ENCODE measurements at regions of chr2 and their contacts with region 1.

Region 1: DNA sequence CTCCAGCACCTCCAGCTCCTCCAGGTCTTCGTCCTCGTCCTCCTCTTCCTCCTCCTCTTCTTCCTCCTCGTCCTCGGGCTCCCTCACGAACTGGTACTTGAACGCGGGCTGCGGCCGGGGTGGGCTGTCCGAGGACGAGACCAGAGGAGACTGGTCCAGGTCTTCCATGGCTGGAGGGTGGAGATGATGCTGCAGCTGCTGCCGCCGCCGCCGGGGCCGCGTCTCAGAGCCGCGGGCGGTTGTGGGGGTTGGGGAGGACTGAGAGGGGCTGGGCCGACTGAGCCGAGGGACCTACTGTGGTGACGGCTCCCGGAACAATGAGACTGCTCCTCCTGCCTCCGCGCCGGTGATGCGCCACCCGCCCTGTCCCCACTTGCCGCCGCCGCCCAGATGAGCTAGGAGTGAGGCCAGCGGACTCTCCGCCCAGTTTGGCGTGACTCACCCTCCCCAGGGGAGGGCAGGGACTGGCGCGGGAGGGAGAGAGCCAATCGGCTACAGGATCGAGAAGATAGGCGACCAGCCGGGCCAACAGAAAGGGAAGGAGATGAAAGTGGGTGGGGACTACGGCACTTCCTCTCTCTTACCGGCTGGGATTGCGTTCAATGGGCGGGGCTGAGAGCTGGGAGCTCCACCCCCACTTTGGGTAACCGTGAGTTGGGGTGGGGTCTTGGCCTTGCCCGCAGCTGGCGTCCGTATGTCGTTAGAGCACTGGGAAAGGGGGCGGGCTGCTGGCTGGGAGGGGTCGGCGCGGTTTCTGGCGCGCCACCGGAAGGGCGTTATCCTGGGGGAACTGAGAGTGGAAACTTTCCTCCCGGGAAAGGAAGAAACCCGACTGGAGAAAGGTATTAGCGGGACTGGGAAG is at the start of gene RTN4:
- DNase-seq: peak; percentile 99
- H3K4me3 Mint-ChIP-seq: peak within 1 kb of the TSS; percentile 94
- H3K27ac Mint-ChIP-seq: peak within 1 kb of the TSS; percentile 99
- H3K4me1 Mint-ChIP-seq: peaks cover 24% of the 10 kb centered on the region
- H3K27me3 Mint-ChIP-seq: no peaks in the 10 kb centered on the region
- CTCF ChIP-seq: no peak
- total RNA-seq, gene RTN4: 389 and 391 TPM in 2 replicates

Region 2: GRCh38 chr2:53970724-53971602 is 1079.4 kb before region 1 on chr2 and contains the start of gene PSME4:
- CTCF ChIA-PET with region 1: no interaction called
- POLR2A ChIA-PET with region 1: interaction called, 11 read pairs
- intact Hi-C with region 1: no loop called
- DNase-seq: peak; percentile 88
- H3K4me3 Mint-ChIP-seq: peak within 1 kb of the TSS; percentile 87
- H3K27ac Mint-ChIP-seq: peak within 1 kb of the TSS; percentile 94
- H3K4me1 Mint-ChIP-seq: peaks cover 33% of the 10 kb centered on the region
- H3K27me3 Mint-ChIP-seq: no peaks in the 10 kb centered on the region
- CTCF ChIP-seq: no peak
- total RNA-seq, gene PSME4: 54.8 and 65.2 TPM in 2 replicates

Region 3: GRCh38 chr2:55010149-55010591 is 40.2 kb before region 1 on chr2:
- CTCF ChIA-PET with region 1: interaction called, 23 read pairs
- POLR2A ChIA-PET with region 1: interaction called, 289 read pairs
- intact Hi-C with region 1: loop called (anchors 2 kb)
- DNase-seq: peak; percentile 63
- H3K4me3 Mint-ChIP-seq: peak overlapping the region; percentile 77
- H3K27ac Mint-ChIP-seq: peak overlapping the region; percentile 76
- H3K4me1 Mint-ChIP-seq: peaks cover 56% of the 10 kb centered on the region
- H3K27me3 Mint-ChIP-seq: no peaks in the 10 kb centered on the region
- CTCF ChIP-seq: no peak

Region 4: DNA sequence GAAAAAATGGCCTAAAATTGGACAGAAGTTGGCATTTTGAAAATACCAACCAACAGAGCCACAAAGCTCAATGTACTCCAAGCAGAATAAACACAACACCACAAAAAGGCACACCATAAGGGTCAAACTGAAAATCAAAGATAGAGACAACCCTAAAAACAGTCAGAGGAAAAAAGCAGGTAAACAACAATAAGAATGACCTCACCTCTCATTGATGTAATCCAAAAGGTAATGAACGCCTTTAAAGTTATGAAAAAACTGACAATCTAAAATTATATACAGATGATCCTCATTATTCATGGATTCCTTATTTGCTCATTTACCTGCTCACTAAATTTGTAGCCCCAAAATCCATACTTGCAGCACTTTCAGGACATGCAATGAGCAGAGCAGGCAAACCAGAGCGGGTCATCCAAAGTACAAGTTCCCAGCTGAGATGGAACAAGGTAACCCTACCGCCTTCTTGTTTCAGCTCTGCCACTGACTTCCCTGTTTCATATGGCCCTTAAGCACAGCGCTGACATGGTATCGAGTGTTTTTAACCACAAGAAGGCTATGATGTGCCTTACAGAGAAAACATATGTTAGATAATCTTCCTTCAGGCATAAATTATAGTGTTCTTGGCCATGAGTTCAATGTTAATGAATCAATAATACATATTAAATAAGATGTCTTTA is 17.2 kb before region 1 on chr2:
- CTCF ChIA-PET with region 1: interaction called, 12 read pairs
- POLR2A ChIA-PET with region 1: interaction called, 68 read pairs
- intact Hi-C with region 1: no loop called
- DNase-seq: no peak
- H3K4me3 Mint-ChIP-seq: no peak overlapping the region
- H3K27ac Mint-ChIP-seq: no peak overlapping the region
- H3K4me1 Mint-ChIP-seq: peaks cover 46% of the 10 kb centered on the region
- H3K27me3 Mint-ChIP-seq: no peaks in the 10 kb centered on the region
- CTCF ChIP-seq: no peak

Region 5: GRCh38 chr2:55093381-55093780 is 43.0 kb after region 1 on chr2:
- CTCF ChIA-PET with region 1: interaction called, 3 read pairs
- POLR2A ChIA-PET with region 1: interaction called, 17 read pairs
- intact Hi-C with region 1: no loop called
- DNase-seq: peak; percentile 76
- H3K4me3 Mint-ChIP-seq: no peak overlapping the region
- H3K27ac Mint-ChIP-seq: peak overlapping the region; percentile 1
- H3K4me1 Mint-ChIP-seq: peaks cover 19% of the 10 kb centered on the region
- H3K27me3 Mint-ChIP-seq: no peaks in the 10 kb centered on the region
- CTCF ChIP-seq: no peak

Region 6: DNA sequence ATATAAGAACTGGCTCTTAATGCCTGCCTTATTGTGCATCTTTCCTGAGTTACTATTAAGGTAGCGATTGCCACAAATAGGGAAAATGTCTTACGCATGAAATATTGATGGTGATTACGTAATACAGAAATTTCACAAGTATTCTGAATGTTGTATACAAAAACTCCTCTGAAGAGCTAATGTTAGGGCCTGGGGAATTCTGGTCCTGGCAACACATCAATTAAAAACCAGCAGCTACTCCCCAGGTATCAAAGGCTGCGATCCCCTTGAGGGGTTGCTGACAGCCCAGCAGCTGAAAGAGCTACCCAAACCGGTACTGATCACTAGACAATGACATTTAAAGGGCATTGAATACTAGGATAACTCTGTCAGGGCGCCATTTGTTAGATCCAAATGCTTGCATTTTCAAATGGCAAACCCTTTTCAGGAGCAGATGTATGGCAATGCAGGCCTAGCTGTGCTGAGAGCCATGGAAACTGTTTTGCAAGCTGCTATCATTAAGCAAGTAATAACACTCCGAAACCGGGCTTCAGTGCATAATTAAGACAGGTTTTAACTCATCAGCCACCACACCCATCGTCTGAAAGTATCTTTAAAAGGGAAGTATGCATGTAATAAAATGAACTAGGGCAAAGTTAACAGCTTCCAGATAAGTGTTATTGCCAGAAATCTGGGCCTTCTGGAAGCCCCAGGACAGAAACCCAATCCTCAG is 103.4 kb after region 1 on chr2:
- CTCF ChIA-PET with region 1: interaction called, 3 read pairs
- POLR2A ChIA-PET with region 1: interaction called, 97 read pairs
- intact Hi-C with region 1: no loop called
- DNase-seq: peak; percentile 71
- H3K4me3 Mint-ChIP-seq: no peak overlapping the region
- H3K27ac Mint-ChIP-seq: no peak overlapping the region
- H3K4me1 Mint-ChIP-seq: peaks cover 26% of the 10 kb centered on the region
- H3K27me3 Mint-ChIP-seq: no peaks in the 10 kb centered on the region
- CTCF ChIP-seq: no peak

Region 7: GRCh38 chr2:55232084-55232862 is 181.9 kb after region 1 on chr2 and contains the starts of genes CLHC1 and RPS27A:
- CTCF ChIA-PET with region 1: interaction called, 3 read pairs
- POLR2A ChIA-PET with region 1: interaction called, 20 read pairs
- intact Hi-C with region 1: no loop called
- DNase-seq: peak; percentile 97
- H3K4me3 Mint-ChIP-seq: peak within 1 kb of the TSS; percentile 87
- H3K27ac Mint-ChIP-seq: peak within 1 kb of the TSS; percentile 96
- H3K4me1 Mint-ChIP-seq: peaks cover 36% of the 10 kb centered on the region
- H3K27me3 Mint-ChIP-seq: no peaks in the 10 kb centered on the region
- CTCF ChIP-seq: no peak
- total RNA-seq, gene CLHC1: 32.8 and 35.4 TPM in 2 replicates
- total RNA-seq, gene RPS27A: 1,343 and 1,536 TPM in 2 replicates

Measured in MCF 10A (cell line).